ENCODE measurements at regions of chr4 and their contacts with region 1.

Region 1: GRCh38 chr4:128868758-128869157 is 59.3 kb downstream of the JADE1 start:
- DNase-seq: peak in 1 of 2 experiments; percentile 28
- H3K4me3 ChIP-seq: no peak overlapping the region
- H3K27ac ChIP-seq: no peak overlapping the region
- H3K4me1 ChIP-seq: peaks cover 0 to 10% (median 0%) of the 10 kb centered on the region in 4 experiments; a peak in 2 of 7 replicates
- H3K27me3 ChIP-seq: no peaks in the 10 kb centered on the region
- CTCF ChIP-seq: no peak
- EP300 ChIP-seq: no peak
- POLR2A ChIP-seq: no peak
- RAD21 ChIP-seq: no peak

Region 2: GRCh38 chr4:128854433-128854832 is 14.3 kb before region 1 on chr4:
- CTCF ChIA-PET with region 1: interaction called, 8 read pairs
- POLR2A ChIA-PET with region 1: interaction called, 46 read pairs
- DNase-seq: no peak
- H3K4me3 ChIP-seq: no peak overlapping the region
- H3K27ac ChIP-seq: no peak overlapping the region
- H3K4me1 ChIP-seq: no peaks in the 10 kb centered on the region
- H3K27me3 ChIP-seq: no peaks in the 10 kb centered on the region
- CTCF ChIP-seq: no peak
- EP300 ChIP-seq: no peak
- POLR2A ChIP-seq: no peak
- RAD21 ChIP-seq: no peak